Mammary epithelial cell (primary cell): ENCODE measurements at regions of chr10 and their contacts with region 1.

Region 1: DNA sequence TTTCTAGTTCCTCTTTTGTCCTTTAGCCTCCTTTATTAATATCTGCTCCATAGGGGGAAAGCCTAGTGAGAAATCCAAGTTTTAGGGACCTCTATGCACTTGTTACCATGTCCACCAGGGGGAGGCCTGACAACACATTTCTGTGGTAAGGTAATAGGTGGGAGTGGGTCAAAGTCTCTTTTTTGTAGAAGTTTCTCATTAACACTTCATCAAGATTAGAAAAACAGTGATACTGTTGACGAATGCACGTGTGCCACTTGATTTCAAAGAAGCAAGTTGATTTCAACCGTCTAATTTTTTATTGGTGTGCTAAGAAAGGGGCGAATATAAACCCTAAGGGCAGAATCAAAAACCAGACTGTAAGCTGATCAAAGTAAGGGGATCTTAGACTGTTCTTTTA is 30.6 kb downstream of the CISD1 start:
- DNase-seq: no peak
- H3K4me3 ChIP-seq: no peak overlapping the region
- H3K27ac ChIP-seq: no peak overlapping the region
- H3K4me1 ChIP-seq: no peaks in the 10 kb centered on the region
- H3K27me3 ChIP-seq: peaks cover 2% of the 10 kb centered on the region
- CTCF ChIP-seq: peak; percentile 84 to 89

Region 2: DNA sequence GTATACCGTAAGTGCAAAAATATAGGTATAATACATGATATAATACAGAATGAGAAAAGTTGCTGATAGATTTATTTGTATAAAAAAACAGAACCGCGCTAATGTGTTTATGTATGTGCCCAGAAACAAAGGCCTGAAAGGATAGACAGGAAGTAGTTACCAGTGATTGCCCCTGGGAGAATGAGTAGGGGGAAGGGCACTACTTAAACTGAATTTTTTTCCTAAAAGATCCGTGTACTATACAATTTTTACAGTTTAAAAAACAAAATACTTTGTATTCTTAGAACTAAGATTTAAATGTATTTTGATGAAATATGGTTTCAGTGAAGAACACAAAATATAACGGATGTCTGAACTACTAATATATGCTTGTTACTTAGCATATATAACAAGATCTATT is 34.8 kb before region 1 on chr10:
- CTCF ChIA-PET with region 1: no interaction called
- dilution Hi-C with region 1: no loop called
- in situ Hi-C with region 1: no loop called
- intact Hi-C with region 1: no loop called
- DNase-seq: no peak
- H3K4me3 ChIP-seq: no peak overlapping the region
- H3K27ac ChIP-seq: no peak overlapping the region
- H3K4me1 ChIP-seq: no peaks in the 10 kb centered on the region
- H3K27me3 ChIP-seq: no peaks in the 10 kb centered on the region
- CTCF ChIP-seq: no peak

Region 3: DNA sequence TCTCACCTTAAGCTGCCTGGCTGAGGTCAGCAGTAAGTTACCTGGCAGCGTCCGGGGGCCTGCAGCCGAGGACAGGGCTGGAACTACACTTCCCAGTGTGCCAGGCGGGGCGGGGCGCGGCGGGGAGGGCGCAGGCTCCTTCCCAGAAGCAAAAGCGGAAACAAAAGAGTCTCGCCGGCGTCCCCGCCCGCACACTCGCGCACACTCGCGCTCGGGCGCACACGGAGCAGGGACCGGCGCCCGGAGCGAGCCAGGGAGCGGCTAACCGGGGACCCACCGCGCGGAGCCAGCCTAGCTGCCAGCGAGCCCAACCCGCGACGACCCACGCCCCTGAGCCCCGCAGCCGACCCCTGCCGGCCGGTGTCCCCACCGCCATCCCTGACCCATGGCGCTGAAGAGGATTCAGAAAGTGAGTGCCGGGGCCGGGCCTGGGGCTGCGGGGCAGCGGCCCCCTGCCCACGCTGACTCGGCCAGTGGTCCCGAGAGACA is 35.3 kb after region 1 on chr10 and contains the start of gene UBE2D1:
- CTCF ChIA-PET with region 1: interaction called, 6 read pairs
- dilution Hi-C with region 1: no loop called
- in situ Hi-C with region 1: no loop called
- intact Hi-C with region 1: loop called (anchors 2 kb)
- DNase-seq: peak; percentile 74
- H3K4me3 ChIP-seq: peak within 1 kb of the TSS; percentile 83 to 95 (median 93)
- H3K27ac ChIP-seq: peak within 1 kb of the TSS; percentile 74
- H3K4me1 ChIP-seq: peaks cover 6% of the 10 kb centered on the region
- H3K27me3 ChIP-seq: no peaks in the 10 kb centered on the region
- CTCF ChIP-seq: no peak
- total RNA-seq, gene UBE2D1: 13.9 to 15.5 TPM

Region 4: GRCh38 chr10:58384999-58385783 is 85.6 kb after region 1 on chr10 and contains the start of gene TFAM:
- CTCF ChIA-PET with region 1: interaction called, 3 read pairs
- dilution Hi-C with region 1: no loop called
- in situ Hi-C with region 1: loop called in 1 of 2 experiments (anchors 10 kb)
- intact Hi-C with region 1: loop called (anchors 1 kb)
- DNase-seq: peak; percentile 91
- H3K4me3 ChIP-seq: peak within 1 kb of the TSS; percentile 73 to 94 (median 76)
- H3K27ac ChIP-seq: peak within 1 kb of the TSS; percentile 63
- H3K4me1 ChIP-seq: peaks cover 16% of the 10 kb centered on the region
- H3K27me3 ChIP-seq: no peaks in the 10 kb centered on the region
- CTCF ChIP-seq: peak; percentile 29 to 72
- total RNA-seq, gene TFAM: 26.2 to 46.3 TPM

Region 5: DNA sequence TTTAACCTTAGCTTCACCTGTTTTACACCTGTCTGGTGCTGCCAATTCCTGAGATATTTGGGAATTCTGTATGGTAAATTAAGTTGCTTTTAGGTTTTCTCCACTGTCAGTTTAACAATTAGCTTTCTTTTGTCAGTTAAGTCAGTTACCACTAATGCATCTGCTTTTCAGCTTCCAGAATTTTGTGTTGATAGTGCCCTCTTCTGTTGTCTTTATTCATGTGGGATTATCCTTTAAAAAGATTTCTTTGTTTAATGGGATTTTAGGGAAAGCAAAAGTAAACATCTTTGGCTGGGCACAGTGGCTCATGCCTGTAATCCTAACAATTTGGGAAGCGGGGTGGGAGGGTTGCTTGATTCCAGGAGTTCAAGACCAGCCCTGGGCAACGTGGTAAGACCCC is 93.7 kb after region 1 on chr10:
- CTCF ChIA-PET with region 1: no interaction called
- dilution Hi-C with region 1: no loop called
- in situ Hi-C with region 1: loop called in 1 of 2 experiments (anchors 10 kb)
- intact Hi-C with region 1: loop called (anchors 2 kb)
- DNase-seq: no peak
- H3K4me3 ChIP-seq: no peak overlapping the region
- H3K27ac ChIP-seq: no peak overlapping the region
- H3K4me1 ChIP-seq: no peaks in the 10 kb centered on the region
- H3K27me3 ChIP-seq: no peaks in the 10 kb centered on the region
- CTCF ChIP-seq: no peak

Region 6: DNA sequence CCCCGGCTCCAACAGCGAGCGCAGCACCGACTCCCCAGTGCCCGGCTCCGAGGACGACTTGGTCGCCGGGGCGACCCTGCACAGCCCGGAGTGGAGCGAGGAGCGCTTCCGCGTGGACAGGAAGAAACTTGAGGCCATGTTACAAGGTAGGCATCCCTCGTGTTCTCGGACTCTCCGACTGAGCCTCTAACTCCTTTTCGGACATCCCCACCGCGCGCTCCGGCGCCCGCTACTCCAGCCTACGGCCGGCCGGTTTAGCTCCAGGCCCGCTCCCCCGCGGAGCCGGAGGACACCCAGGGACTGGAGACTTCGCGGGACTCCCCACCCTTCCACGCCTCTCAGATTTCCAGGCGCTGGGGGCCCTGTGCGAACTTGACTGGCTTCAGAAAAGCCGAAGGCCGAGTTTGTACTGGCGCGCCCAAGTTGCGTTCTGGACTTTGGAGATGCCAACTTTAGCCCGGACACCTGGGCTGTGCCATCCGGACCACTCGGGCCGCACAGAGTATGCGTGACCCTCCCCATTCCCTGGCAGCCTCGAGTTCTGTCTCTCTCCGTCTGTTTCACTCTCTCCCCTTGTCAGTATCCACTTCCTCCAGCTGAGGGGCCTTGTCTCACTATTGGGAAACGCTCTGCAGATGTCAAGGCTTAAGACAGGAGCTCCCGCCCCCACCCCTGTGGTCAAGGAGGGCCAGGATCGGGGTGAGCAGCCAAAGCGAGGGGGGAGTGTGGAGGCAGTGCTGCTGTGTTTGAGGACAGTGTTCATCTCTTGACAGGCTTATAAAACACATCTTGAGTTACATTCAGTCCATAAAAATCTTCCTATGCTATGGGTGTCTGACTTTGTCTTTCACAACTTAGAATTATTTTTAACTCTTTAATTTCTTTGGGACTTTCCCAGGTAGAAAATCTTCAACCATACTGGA is 213.9 kb after region 1 on chr10:
- CTCF ChIA-PET with region 1: no interaction called
- dilution Hi-C with region 1: no loop called
- in situ Hi-C with region 1: no loop called
- intact Hi-C with region 1: loop called (anchors 5 kb)
- DNase-seq: peak; percentile 62
- H3K4me3 ChIP-seq: peak overlapping the region; percentile 84 to 95 (median 90)
- H3K27ac ChIP-seq: peak overlapping the region; percentile 72
- H3K4me1 ChIP-seq: peaks cover 22% of the 10 kb centered on the region
- H3K27me3 ChIP-seq: no peaks in the 10 kb centered on the region
- CTCF ChIP-seq: no peak